ENCODE measurements at regions of chr11 and their contacts with region 1.

Region 1: DNA sequence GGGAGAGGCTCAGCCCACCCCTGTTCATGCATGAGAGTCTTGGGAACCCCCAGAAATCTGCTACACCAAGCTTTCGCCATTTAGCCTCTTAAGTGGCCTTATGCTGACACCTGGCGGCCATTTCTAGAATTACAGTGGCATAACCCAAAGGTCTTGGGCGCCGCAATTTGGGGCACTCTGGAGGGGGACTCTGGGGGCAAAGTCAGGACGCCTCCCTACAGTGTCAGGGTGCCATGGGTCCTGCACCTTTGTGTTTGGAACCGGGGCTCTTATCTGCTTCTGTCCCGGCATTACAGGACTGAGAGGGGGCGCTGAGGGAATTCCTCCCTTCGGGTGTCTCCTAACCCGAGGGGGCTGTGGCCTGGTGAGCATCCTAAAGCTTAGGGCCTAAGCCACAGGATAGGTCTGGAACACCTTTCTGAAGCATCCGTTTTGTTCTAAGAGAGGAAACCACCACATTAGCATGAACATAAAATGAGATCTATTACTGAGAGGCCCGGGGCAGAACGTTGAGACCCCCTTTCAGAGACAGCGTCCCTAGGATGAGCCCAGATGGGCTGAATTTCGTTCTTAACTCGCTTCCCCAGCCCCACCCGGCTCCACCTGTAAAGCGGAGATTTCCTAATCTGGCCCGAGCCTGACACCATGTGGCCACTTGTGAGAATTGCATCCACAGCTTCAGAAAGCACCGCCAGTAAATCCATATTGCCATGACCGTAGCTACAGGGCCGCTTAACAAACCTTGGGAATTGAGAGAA is 9.3 kb downstream of the INS start:
- DNase-seq: peak; percentile 85 to 90
- ATAC-seq: peak; percentile 33 to 53; a peak in 5 of 6 replicates
- H3K4me3 ChIP-seq: no peak overlapping the region
- H3K27ac ChIP-seq: peak overlapping the region; percentile 9 to 63; a peak in 4 of 6 replicates
- H3K4me1 ChIP-seq: no peaks in the 10 kb centered on the region
- CTCF ChIP-seq: peak; percentile 64
- EP300 ChIP-seq: no peak
- POLR2A ChIP-seq: no peak
- RAD21 ChIP-seq: peak; percentile 78 to 89

Region 2: DNA sequence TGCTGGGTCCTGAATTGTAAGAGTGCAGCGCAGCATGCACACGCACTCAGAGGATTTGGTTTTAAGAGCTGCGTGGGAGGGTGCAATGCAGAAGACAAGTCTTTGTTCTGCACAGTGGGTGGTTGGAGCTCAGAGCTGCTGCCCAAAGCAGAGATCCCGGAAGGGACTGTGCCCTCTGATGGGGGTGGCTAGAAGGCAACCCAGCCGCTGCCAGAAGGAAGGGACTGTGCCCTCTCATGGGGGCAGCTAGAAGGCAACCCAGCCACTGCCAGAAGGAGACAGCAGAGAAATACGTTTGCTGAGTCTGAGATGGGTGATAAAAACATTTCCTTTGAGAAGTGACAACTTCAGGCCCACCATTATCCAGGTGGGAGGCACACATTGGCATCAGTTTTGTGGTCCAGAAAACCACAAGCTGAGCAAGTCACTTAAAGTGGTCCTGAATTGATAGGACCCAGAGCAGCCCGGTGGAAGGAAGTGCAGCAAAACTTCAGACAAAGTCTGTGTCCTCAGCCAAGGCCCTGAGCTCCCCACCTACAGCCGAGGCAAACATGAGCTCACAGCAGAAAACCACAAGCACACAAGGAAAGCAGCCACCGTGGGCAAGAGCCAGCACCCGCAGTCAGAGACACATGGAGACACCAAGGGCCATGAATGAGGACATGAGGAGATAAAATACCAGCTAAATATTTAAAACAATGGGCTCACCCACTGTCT is 450.4 kb before region 1 on chr11:
- CTCF ChIA-PET with region 1: interaction called, 10 read pairs
- POLR2A ChIA-PET with region 1: no interaction called
- DNase-seq: no peak
- ATAC-seq: no peak
- H3K4me3 ChIP-seq: no peak overlapping the region
- H3K27ac ChIP-seq: no peak overlapping the region
- H3K4me1 ChIP-seq: peaks cover under 1% of the 10 kb centered on the region; the same call in 1 of the 3 replicates
- CTCF ChIP-seq: no peak
- EP300 ChIP-seq: no peak
- POLR2A ChIP-seq: no peak
- RAD21 ChIP-seq: no peak

Region 3: DNA sequence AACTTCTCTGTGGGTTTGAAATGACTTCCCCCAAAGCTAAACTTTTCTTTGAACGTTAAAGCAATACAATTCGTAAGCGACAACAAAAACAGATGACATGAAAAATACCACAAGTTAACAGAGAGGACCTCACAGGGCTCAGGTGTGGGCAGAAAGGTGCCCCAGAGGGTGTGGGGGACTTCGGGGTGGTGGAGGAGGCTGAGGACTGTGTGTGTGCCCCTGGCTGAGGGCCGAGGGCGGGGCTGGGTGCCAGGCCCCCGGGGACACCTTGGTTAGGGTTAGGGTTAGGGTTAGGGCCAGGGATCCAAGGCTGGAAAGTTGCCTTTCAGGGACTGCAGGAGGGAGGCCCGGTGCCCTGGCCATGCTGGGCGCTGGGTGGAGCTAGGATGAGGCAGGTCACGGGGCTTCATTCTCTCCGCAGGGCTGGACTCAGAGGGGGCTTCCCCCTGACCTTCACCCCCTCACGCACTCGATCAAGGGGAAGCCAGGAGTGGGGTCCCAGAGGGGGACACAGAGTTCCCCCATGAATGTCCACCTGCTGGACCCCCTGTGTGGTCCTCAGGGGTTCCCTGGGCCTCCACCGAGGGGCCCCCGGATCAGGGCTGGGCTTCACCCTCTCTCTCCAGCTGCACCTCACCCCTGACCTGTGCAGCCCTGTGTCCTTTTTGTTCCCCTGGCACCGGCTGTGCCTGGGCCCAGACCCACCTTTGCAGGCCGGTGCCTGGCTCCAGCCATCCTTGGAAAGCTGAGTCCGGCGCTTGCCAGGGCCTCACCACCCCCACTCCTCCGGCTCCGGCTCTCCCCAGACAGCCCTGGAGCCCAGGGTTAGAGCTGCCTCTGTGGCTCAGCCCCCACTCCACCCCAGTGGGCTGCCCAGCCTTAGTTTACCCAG is 305.9 kb before region 1 on chr11:
- CTCF ChIA-PET with region 1: interaction called, 60 read pairs
- POLR2A ChIA-PET with region 1: no interaction called
- DNase-seq: no peak
- ATAC-seq: no peak
- H3K4me3 ChIP-seq: no peak overlapping the region
- H3K27ac ChIP-seq: no peak overlapping the region
- H3K4me1 ChIP-seq: peaks cover 7% of the 10 kb centered on the region
- CTCF ChIP-seq: no peak
- EP300 ChIP-seq: no peak
- POLR2A ChIP-seq: no peak
- RAD21 ChIP-seq: no peak

Region 4: GRCh38 chr11:1917671-1918516 is 233.8 kb before region 1 on chr11:
- CTCF ChIA-PET with region 1: interaction called, 25 read pairs
- POLR2A ChIA-PET with region 1: no interaction called
- DNase-seq: no peak
- ATAC-seq: peak; percentile 52 to 76; a peak in 5 of 6 replicates
- H3K4me3 ChIP-seq: no peak overlapping the region
- H3K27ac ChIP-seq: no peak overlapping the region
- H3K4me1 ChIP-seq: no peaks in the 10 kb centered on the region
- CTCF ChIP-seq: no peak
- EP300 ChIP-seq: no peak
- POLR2A ChIP-seq: no peak
- RAD21 ChIP-seq: no peak

Region 5: GRCh38 chr11:2002807-2003206 is 148.9 kb before region 1 on chr11:
- CTCF ChIA-PET with region 1: interaction called, 35 read pairs
- POLR2A ChIA-PET with region 1: no interaction called
- DNase-seq: no peak
- ATAC-seq: peak; percentile 49 to 72; a peak in 4 of 6 replicates
- H3K4me3 ChIP-seq: no peak overlapping the region
- H3K27ac ChIP-seq: no peak overlapping the region
- H3K4me1 ChIP-seq: no peaks in the 10 kb centered on the region
- CTCF ChIP-seq: no peak
- EP300 ChIP-seq: no peak
- POLR2A ChIP-seq: no peak
- RAD21 ChIP-seq: no peak

Region 6: DNA sequence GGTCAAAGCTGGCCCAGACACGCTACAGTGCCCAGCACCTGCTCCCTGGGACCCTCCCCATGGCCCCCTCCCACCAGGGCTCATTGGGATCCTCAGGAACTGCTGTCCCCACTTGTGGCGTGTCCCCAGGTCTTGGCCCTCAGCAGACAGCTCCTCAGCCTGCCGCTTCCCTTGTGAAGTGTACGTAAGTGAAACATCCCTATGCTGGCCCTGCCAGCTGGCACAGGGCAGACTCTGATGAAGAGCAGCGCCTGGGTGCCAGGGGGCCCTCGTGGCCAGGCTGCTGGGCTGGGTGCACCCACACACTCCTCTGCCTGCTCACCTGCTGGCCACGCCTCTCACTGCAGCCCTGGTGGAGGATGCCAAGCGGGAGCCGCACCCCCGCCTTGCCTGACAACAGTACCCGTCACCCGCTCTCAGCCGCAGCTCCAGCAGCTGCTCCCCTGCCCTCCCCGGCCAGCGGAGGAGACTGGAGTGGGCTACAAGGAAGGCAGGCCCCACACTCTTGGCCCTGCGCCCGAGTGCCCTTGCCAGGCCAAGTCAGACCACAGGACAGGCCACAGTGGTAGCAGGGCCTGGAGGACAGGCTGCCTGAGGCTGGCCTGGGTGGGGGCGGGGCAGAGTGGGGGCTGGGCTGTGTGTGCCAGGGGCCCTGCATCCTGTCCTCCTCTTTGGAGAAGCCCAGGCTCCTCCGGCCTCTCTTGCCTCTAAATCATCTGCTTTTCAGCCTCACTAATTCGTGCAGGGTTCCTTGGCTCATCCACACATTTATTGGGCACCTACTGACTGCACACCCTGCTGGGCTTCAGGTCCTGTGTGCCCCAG is 52.0 kb before region 1 on chr11:
- CTCF ChIA-PET with region 1: interaction called, 59 read pairs
- POLR2A ChIA-PET with region 1: no interaction called
- DNase-seq: no peak
- ATAC-seq: peak in 1 of 2 experiments; percentile 33; a peak in 3 of 6 replicates
- H3K4me3 ChIP-seq: no peak overlapping the region
- H3K27ac ChIP-seq: no peak overlapping the region
- H3K4me1 ChIP-seq: no peaks in the 10 kb centered on the region
- CTCF ChIP-seq: no peak
- EP300 ChIP-seq: no peak
- POLR2A ChIP-seq: no peak
- RAD21 ChIP-seq: no peak

Region 7: DNA sequence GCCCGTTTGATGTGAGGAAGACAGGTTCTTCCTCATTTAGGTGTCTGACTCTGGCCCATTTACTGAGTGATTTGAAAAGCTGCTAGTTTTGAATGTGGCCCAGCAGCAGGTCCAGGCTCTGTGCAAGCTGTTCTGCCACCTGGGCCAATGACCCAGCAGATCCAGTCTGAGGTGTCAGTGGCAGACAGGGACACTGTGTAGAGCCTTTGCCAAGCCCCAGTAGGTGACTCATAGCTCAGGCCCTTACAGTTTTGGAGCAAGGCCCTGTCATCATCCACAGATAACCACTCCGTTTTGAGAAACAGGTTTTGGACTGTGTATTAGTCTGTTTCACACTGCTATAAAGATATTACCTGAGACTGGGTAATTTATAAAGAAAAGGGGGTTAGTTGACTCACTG is 174.0 kb after region 1 on chr11:
- CTCF ChIA-PET with region 1: no interaction called
- POLR2A ChIA-PET with region 1: no interaction called
- DNase-seq: no peak
- ATAC-seq: no peak
- H3K4me3 ChIP-seq: no peak overlapping the region
- H3K27ac ChIP-seq: no peak overlapping the region
- H3K4me1 ChIP-seq: no peaks in the 10 kb centered on the region
- CTCF ChIP-seq: no peak
- EP300 ChIP-seq: no peak
- POLR2A ChIP-seq: no peak
- RAD21 ChIP-seq: no peak

Region 8: GRCh38 chr11:2420502-2421225 is 269.0 kb after region 1 on chr11:
- CTCF ChIA-PET with region 1: interaction called, 12 read pairs
- POLR2A ChIA-PET with region 1: no interaction called
- DNase-seq: peak; percentile 69 to 91
- ATAC-seq: peak; percentile 90 to 97
- H3K4me3 ChIP-seq: no peak overlapping the region
- H3K27ac ChIP-seq: peak overlapping the region in 1 of 2 experiments; percentile 62; a peak in 3 of 6 replicates
- H3K4me1 ChIP-seq: no peaks in the 10 kb centered on the region
- CTCF ChIP-seq: peak; percentile 84
- EP300 ChIP-seq: no peak
- POLR2A ChIP-seq: no peak
- RAD21 ChIP-seq: peak; percentile 92

Measured in A549 (cell line).